ENCODE measurements at regions of chr5 and their contacts with region 1.

Region 1: GRCh38 chr5:43105369-43106289 is 15.1 kb upstream of the ZNF131 start:
- DNase-seq: peak; percentile 87 to 98
- ATAC-seq: peak; percentile 92 to 99 (median 94)
- H3K4me3 ChIP-seq: peak overlapping the region; percentile 35
- H3K4me3 Mint-ChIP-seq: peak overlapping the region; percentile 88
- H3K27ac ChIP-seq: peak overlapping the region; percentile 64
- H3K27ac Mint-ChIP-seq: peak overlapping the region; percentile 87 to 91
- H3K4me1 ChIP-seq: peaks cover 16% of the 10 kb centered on the region
- H3K4me1 Mint-ChIP-seq: peaks cover 12 to 25% of the 10 kb centered on the region in 2 donors
- H3K27me3 ChIP-seq: no peaks in the 10 kb centered on the region
- H3K27me3 Mint-ChIP-seq: no peaks in the 10 kb centered on the region
- CTCF ChIP-seq: peak; percentile 100

Region 2: GRCh38 chr5:42908509-42909488 is 196.8 kb before region 1 on chr5:
- intact Hi-C with region 1: loop called (anchors 1 kb)
- DNase-seq: peak; percentile 83 to 98
- ATAC-seq: peak; percentile 84 to 95 (median 93)
- H3K4me3 ChIP-seq: peak overlapping the region; percentile 67
- H3K4me3 Mint-ChIP-seq: peak overlapping the region; percentile 96
- H3K27ac ChIP-seq: peak overlapping the region; percentile 41
- H3K27ac Mint-ChIP-seq: peak overlapping the region; percentile 86 to 90
- H3K4me1 ChIP-seq: peaks cover 8% of the 10 kb centered on the region
- H3K4me1 Mint-ChIP-seq: peaks cover 8 to 14% of the 10 kb centered on the region in 2 donors
- H3K27me3 ChIP-seq: no peaks in the 10 kb centered on the region
- H3K27me3 Mint-ChIP-seq: peaks cover 15 to 26% of the 10 kb centered on the region in 2 donors
- CTCF ChIP-seq: peak; percentile 81

Region 3: GRCh38 chr5:43120720-43121564 is 15.3 kb after region 1 on chr5 and contains the start of gene ZNF131:
- intact Hi-C with region 1: loop called (anchors 1 kb)
- DNase-seq: peak; percentile 99
- ATAC-seq: peak; percentile 87 to 96 (median 89)
- H3K4me3 ChIP-seq: peak within 1 kb of the TSS; percentile 59
- H3K4me3 Mint-ChIP-seq: peak within 1 kb of the TSS; percentile 87
- H3K27ac ChIP-seq: peak within 1 kb of the TSS; percentile 88
- H3K27ac Mint-ChIP-seq: peak within 1 kb of the TSS; percentile 88 to 99
- H3K4me1 ChIP-seq: peaks cover 13% of the 10 kb centered on the region
- H3K4me1 Mint-ChIP-seq: peaks cover 26 to 29% of the 10 kb centered on the region in 2 donors
- H3K27me3 ChIP-seq: no peaks in the 10 kb centered on the region
- H3K27me3 Mint-ChIP-seq: no peaks in the 10 kb centered on the region
- CTCF ChIP-seq: no peak
- total RNA-seq, gene ZNF131: 69.0 to 84.0 (median 83.5) TPM

Region 4: GRCh38 chr5:43389679-43390329 is 284.2 kb after region 1 on chr5:
- intact Hi-C with region 1: loop called (anchors 1 kb)
- DNase-seq: peak; percentile 20 to 78
- ATAC-seq: peak; percentile 80 to 88 (median 83)
- H3K4me3 ChIP-seq: no peak overlapping the region
- H3K4me3 Mint-ChIP-seq: no peak overlapping the region
- H3K27ac ChIP-seq: no peak overlapping the region
- H3K27ac Mint-ChIP-seq: peak overlapping the region in 1 of 2 donors; percentile 59
- H3K4me1 ChIP-seq: no peaks in the 10 kb centered on the region
- H3K4me1 Mint-ChIP-seq: peaks cover 9 to 15% of the 10 kb centered on the region in 2 donors
- H3K27me3 ChIP-seq: no peaks in the 10 kb centered on the region
- H3K27me3 Mint-ChIP-seq: no peaks in the 10 kb centered on the region
- CTCF ChIP-seq: peak; percentile 85